ENCODE measurements at regions of chr5 and their contacts with region 1.

Region 1: DNA sequence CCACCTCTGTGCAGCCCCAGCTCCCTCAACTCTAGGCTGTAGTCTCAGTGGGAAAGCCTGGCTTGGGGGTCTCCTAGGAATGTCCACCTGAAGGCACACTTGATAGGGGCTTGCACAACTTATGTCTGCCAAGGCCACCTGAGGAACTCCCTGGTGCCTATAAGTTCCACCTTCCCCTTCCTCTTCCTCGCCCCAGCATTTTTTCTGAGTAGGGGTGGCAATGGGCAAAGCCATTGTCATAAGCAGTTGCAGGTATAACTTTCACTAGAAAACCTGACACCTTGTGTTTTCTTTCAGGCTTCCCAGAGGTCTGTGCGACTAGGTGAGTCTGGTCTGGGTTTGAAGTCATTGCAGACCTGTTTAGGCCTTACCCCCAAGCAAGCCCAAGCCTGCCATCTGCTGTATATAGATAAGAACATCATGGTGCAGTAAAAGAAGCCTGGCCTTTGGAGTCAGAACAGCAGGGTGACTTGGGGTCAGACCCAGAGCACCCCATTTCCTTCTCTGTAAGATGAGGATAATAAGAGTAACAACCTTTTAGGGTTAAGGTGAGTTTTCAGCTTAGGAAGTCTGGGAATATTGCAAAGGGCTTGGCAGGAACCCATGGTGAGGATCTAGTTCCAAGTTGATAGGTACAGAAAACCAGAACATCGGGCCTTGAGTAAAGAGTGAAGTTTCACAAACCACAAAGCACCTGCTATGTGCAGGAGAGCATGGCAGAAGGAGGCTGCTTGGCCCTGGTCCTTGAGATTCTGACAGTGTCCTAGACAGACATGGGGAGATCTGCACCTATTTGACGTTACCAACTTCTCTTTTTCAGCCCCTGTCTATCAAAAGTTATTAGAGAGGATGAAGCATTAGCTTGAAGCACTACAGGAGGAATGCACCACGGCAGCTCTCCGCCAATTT is 33.8 kb downstream of the TGFBI start:
- DNase-seq: no peak
- ATAC-seq: no peak
- H3K4me3 ChIP-seq: no peak overlapping the region
- H3K27ac ChIP-seq: no peak overlapping the region
- H3K4me1 ChIP-seq: peaks cover 3 to 46% (median 25%) of the 10 kb centered on the region in 9 donors
- H3K27me3 ChIP-seq: no peaks in the 10 kb centered on the region
- CTCF ChIP-seq: peak; percentile 10 to 63 (median 50)

Region 2: DNA sequence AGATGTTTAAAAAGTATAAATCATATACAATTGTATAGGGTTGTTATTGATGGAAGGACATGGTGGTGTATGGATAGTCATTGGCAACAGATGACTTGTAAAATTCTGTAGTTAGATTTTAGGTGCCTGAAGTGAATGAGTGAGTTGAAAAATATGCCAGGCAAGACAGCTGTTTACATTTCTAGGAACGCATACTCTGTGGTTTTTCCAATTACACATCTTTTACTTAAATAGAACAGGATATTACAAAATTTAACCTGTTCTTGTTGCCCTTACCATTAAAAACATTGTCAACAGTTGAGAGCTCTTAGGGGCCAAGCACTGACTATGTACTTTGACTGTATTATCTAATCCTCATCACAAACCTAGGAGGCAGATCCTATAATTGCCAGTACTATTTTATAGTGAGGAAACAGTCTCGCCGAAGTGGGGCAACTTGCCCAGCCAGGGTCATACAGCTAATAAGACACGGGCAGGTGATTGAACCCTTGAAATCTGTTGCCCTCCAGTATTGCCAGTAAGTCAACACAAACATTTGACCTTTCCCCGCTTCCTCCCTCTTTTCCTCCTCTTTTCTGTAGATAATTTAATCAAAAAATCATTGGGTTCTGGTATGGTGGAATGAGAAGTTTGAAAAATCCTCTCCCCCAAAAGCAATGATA is 752.2 kb before region 1 on chr5:
- intact Hi-C with region 1: no loop called
- DNase-seq: no peak
- ATAC-seq: no peak
- H3K4me3 ChIP-seq: no peak overlapping the region
- H3K27ac ChIP-seq: no peak overlapping the region
- H3K4me1 ChIP-seq: no peaks in the 10 kb centered on the region
- H3K27me3 ChIP-seq: peaks cover 0 to 24% (median 0%) of the 10 kb centered on the region in 7 donors
- CTCF ChIP-seq: no peak

Region 3: DNA sequence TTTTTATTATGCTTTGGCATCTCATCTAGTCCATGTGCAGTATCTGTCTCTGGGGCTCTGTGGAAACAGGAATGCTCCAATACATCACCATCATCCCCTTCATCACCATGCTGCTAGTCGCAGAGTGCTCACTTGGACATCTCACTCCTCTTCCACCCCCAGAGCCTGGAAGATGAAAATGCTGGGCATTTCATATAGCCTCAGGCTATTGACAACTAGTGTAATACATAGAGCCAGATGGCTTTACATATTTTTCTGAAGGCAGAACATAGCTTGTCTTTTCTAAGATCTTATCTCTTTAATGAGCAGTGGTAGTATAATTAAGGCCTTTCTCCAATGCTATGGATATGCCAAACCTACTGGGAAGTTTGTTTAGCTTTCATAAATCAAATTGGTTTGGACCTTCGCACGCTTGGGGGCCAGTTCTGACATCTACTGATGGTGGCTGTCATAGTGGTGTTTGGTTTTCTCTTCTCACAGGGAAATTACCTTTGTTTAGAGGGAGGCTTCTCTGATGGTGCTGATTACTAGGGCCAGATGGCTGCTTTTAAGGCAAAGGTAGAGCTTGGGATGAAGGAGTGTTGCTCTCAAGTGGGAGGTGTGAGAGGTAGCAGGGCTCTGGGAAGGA is 420.8 kb before region 1 on chr5:
- intact Hi-C with region 1: no loop called
- DNase-seq: no peak
- ATAC-seq: no peak
- H3K4me3 ChIP-seq: no peak overlapping the region
- H3K27ac ChIP-seq: no peak overlapping the region
- H3K4me1 ChIP-seq: no peaks in the 10 kb centered on the region
- H3K27me3 ChIP-seq: peaks cover 0 to 19% (median 8%) of the 10 kb centered on the region in 7 donors
- CTCF ChIP-seq: no peak

Region 4: DNA sequence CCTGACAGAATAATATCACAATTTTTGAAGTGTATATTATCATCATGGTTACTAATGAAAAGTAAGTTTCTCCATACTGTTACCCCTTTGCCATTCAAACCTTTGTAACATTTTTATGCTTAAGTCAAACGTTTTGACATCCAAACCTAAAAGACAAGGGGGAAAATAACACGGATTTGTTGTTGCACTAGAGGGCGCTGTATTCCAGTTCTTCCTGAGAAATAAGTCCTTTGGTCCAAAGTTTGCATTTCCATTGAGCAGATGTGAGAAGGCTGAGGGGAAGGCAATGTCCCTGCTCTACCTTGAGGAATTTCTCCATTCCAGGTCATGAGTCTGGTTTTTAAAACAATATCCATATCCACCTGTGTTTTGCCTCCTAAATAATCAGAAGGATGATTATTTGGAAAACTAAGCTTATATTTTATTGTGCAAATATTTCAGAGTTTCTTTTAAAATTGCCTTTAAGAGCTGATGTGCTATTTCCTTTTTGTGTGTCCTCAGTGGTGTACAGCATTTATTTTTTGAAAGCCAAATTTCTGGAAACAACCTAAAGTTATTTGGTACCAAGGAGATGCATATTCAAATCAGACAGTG is 117.6 kb before region 1 on chr5:
- intact Hi-C with region 1: loop called (anchors 1 to 5 kb)
- DNase-seq: peak in 1 of 2 donors; percentile 68
- ATAC-seq: peak in 5 of 8 donors; percentile 55 to 76 (median 68)
- H3K4me3 ChIP-seq: no peak overlapping the region
- H3K27ac ChIP-seq: no peak overlapping the region
- H3K4me1 ChIP-seq: peaks cover 0 to 8% (median 0%) of the 10 kb centered on the region in 9 donors
- H3K27me3 ChIP-seq: peaks cover 0 to 19% (median 0%) of the 10 kb centered on the region in 7 donors
- CTCF ChIP-seq: peak; percentile 67 to 89 (median 79)

Region 5: DNA sequence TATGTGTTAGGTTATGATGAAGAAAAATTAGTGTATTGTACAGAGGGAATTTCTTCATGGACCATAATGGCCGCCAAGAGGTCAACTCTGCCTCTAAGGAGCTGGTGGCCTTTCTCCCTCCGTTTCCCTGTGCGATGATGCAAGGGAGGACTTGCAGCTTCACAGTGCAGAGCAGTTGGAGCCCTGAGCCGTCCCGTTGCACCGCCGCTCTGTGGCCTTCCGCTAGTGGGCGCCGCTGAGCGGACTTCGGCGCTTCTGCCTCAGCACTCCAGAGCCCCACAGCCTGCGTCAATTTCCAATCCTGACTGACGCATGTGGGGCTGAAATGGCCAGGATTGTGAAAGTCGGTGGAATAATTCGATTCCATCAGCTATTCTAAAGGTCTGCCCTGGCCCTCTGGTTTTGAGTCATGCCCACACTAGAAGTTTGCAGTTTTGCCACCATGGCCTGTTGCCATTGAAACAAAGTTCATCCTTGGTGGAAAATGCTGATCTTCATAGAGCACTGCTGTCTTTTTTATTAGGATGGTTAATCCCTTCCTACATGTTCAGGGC is 85.2 kb before region 1 on chr5:
- intact Hi-C with region 1: loop called in 1 of 10 experiments (anchors 5 kb)
- DNase-seq: peak; percentile 56 to 79
- ATAC-seq: peak; percentile 70 to 89 (median 79)
- H3K4me3 ChIP-seq: no peak overlapping the region
- H3K27ac ChIP-seq: peak overlapping the region in 4 of 10 donors; percentile 36 to 77 (median 56)
- H3K4me1 ChIP-seq: peaks cover 0 to 45% (median 30%) of the 10 kb centered on the region in 9 donors
- H3K27me3 ChIP-seq: peaks cover 0 to 18% (median 0%) of the 10 kb centered on the region in 7 donors
- CTCF ChIP-seq: peak; percentile 23 to 77 (median 60)

Region 6: GRCh38 chr5:136028782-136029742 is 33.6 kb before region 1 on chr5 and contains the start of gene TGFBI:
- intact Hi-C with region 1: loop called in 2 of 10 experiments (anchors 5 kb)
- DNase-seq: peak; percentile 78 to 83
- ATAC-seq: peak; percentile 84 to 94 (median 90)
- H3K4me3 ChIP-seq: peak within 1 kb of the TSS; percentile 14 to 81 (median 72)
- H3K27ac ChIP-seq: peak within 1 kb of the TSS; percentile 23 to 93 (median 81)
- H3K4me1 ChIP-seq: peaks cover 6 to 90% (median 68%) of the 10 kb centered on the region in 9 donors
- H3K27me3 ChIP-seq: peaks cover 0 to 9% (median 0%) of the 10 kb centered on the region in 7 donors
- CTCF ChIP-seq: peak in 6 of 9 donors; percentile 14 to 42 (median 24)
- total RNA-seq, gene TGFBI: 29.6 to 137 (median 46.2) TPM

Region 7: DNA sequence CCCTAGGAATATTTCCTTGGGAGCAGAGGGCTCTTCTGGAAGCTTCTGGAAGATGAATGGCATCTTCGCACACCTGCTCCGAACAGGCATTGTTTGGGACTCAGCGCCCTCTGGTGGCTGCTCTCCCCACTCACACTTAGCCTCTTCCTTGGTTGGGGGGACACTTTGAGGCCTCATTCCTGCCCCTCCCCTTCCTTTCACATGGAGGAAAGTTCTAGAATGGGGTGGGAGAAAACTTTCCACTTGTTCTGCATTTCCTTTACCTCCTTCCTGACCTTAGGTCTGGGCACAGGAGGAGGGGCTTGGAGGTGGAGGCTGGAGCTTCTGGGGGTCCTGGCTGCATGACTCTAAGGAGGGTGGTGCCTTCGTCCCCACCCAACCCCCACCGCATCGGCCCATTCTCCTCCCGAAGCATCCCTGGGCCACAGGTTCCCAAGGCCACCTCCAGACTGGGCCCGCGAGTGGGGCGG is 149.7 kb after region 1 on chr5:
- intact Hi-C with region 1: loop called in 1 of 10 experiments (anchors 5 kb)
- DNase-seq: peak; percentile 32 to 64
- ATAC-seq: peak in 5 of 8 donors; percentile 46 to 65 (median 54)
- H3K4me3 ChIP-seq: no peak overlapping the region
- H3K27ac ChIP-seq: no peak overlapping the region
- H3K4me1 ChIP-seq: no peaks in the 10 kb centered on the region
- H3K27me3 ChIP-seq: peaks cover 0 to 45% (median 27%) of the 10 kb centered on the region in 7 donors
- CTCF ChIP-seq: peak; percentile 58 to 95 (median 90)

Measured in heart right ventricle (tissue), 16 donors.